ENCODE measurements at regions of chr5 and their contacts with region 1.

Region 1: DNA sequence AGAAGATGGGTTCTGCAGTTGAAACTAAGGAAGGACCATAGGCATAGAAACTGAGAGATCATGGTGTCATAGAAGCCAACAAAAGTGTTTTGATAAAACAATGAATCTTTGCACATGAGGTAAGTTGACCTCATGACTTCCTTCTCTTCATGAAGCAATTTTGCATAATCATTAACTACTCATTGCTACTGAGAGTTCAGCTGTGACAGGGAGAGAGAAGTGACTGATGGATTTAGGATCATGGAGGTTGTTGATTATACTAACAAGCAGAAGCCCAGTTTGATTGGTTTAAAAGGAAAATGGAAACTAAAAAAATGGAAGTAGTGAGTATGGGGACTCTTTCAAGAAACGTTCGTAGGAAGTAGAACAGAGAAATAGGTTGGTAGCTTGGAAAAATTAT is 51.2 kb downstream of the PARP8 start:
- DNase-seq: no peak
- ATAC-seq: peak; percentile 70
- H3K4me3 ChIP-seq: no peak overlapping the region
- H3K4me3 Mint-ChIP-seq: peak overlapping the region in 3 of 10 donors; percentile 6 to 27 (median 20)
- H3K27ac ChIP-seq: no peak overlapping the region
- H3K27ac Mint-ChIP-seq: peak overlapping the region in 3 of 9 donors; percentile 0 to 95 (median 13)
- H3K4me1 ChIP-seq: peaks cover 45 to 50% of the 10 kb centered on the region in 2 donors
- H3K4me1 Mint-ChIP-seq: peaks cover 54 to 97% (median 90%) of the 10 kb centered on the region in 7 donors
- H3K27me3 ChIP-seq: no peaks in the 10 kb centered on the region
- H3K27me3 Mint-ChIP-seq: no peaks in the 10 kb centered on the region

Region 2: GRCh38 chr5:50738864-50739263 is 21.2 kb after region 1 on chr5:
- CTCF ChIA-PET with region 1: interaction called, 3 read pairs
- POLR2A ChIA-PET with region 1: interaction called, 5 read pairs
- intact Hi-C with region 1: loop called in 1 of 2 experiments (anchors 2 kb)
- DNase-seq: no peak
- ATAC-seq: no peak
- H3K4me3 ChIP-seq: no peak overlapping the region
- H3K4me3 Mint-ChIP-seq: no peak overlapping the region
- H3K27ac ChIP-seq: no peak overlapping the region
- H3K27ac Mint-ChIP-seq: peak overlapping the region in 5 of 9 donors; percentile 28 to 90 (median 76)
- H3K4me1 ChIP-seq: peaks cover 28 to 44% of the 10 kb centered on the region in 2 donors
- H3K4me1 Mint-ChIP-seq: peaks cover 22 to 88% (median 71%) of the 10 kb centered on the region in 7 donors
- H3K27me3 ChIP-seq: no peaks in the 10 kb centered on the region
- H3K27me3 Mint-ChIP-seq: no peaks in the 10 kb centered on the region

Measured in naive thymus-derived CD4-positive, alpha-beta T cell (primary cell).